ENCODE measurements at regions of chr20 and their contacts with region 1.

Region 1: GRCh38 chr20:35490736-35491181 is 35.4 kb downstream of the CEP250 start:
- DNase-seq: peak; percentile 88
- H3K4me3 ChIP-seq: peak overlapping the region; percentile 85
- H3K27ac ChIP-seq: peak overlapping the region; percentile 60
- H3K4me1 ChIP-seq: peaks cover 28% of the 10 kb centered on the region
- CTCF ChIP-seq: no peak

Region 2: DNA sequence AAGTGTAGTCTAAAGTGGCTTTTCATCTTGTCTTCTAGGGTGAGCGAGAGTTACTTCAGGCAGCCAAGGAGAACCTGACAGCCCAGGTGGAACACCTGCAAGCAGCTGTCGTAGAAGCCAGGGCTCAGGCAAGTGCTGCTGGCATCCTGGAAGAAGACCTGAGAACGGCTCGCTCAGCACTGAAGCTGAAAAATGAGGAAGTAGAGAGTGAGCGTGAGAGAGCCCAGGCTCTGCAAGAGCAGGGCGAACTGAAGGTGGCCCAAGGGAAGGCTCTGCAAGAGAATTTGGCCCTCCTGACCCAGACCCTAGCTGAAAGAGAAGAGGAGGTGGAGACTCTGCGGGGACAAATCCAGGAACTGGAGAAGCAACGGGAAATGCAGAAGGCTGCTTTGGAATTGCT is 11.6 kb after region 1 on chr20:
- CTCF ChIA-PET with region 1: no interaction called
- POLR2A ChIA-PET with region 1: interaction called, 8 read pairs
- intact Hi-C with region 1: loop called (anchors 1 kb)
- DNase-seq: peak; percentile 93
- H3K4me3 ChIP-seq: no peak overlapping the region
- H3K27ac ChIP-seq: peak overlapping the region; percentile 64
- H3K4me1 ChIP-seq: peaks cover 31% of the 10 kb centered on the region
- CTCF ChIP-seq: no peak